HepG2 (cell line): ENCODE measurements at regions of chr14 and their contacts with region 1.

Region 1: GRCh38 chr14:94636522-94637412 is 24.6 kb downstream of the SERPINA3 start:
- DNase-seq: peak; percentile 80
- ATAC-seq: peak; percentile 74
- H3K4me3 ChIP-seq: peak overlapping the region in 1 of 3 experiments; percentile 39; a peak in 1 of 6 replicates
- H3K27ac ChIP-seq: peak overlapping the region; percentile 52
- H3K4me1 ChIP-seq: peaks cover 92% of the 10 kb centered on the region
- H3K27me3 ChIP-seq: no peaks in the 10 kb centered on the region
- CTCF ChIP-seq: peak; percentile 84
- EP300 ChIP-seq: peak in 1 of 2 experiments; percentile 94; a peak in 2 of 4 replicates
- POLR2A ChIP-seq: no peak
- RAD21 ChIP-seq: no peak; the same call in none of the 2 replicates

Region 2: DNA sequence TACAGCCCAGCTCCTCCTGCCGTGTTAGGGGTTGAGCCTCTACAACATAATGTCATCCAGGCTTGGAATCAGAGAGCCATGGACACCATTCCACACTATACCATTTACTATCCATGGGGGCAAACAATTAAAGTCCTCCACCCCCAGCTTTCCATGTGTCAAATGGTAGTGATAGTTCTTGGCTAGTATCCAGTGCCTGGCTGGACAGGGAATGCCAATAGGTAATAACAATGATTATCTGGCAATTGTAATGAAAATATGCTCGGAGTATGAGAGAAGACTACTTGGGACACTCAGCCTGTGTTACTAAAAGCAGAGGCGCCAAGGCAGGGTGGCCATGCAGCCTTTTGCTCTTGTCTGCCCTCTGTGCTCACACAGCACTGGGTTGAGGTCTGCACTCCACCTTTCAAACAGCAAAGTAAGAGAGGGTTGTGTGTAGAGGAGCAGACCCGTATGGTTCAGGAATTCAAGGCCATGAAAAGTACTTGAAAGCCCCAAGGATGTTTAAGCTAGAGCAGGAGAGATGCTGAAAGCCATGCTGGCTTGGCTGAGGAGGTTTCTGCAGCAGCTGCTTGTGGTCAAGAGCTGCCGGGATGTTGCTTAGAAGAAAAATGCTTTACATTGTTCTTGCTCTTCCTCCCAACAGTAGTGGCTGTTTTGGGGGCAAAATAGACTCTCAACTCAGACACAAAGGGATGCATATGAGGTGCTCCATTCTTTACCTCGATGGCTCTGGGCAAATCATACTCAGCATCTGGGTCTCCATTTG is 13.9 kb before region 1 on chr14:
- CTCF ChIA-PET with region 1: no interaction called
- POLR2A ChIA-PET with region 1: interaction called, 12 read pairs
- in situ Hi-C with region 1: no loop called
- intact Hi-C with region 1: no loop called
- DNase-seq: no peak
- ATAC-seq: no peak
- H3K4me3 ChIP-seq: no peak overlapping the region
- H3K27ac ChIP-seq: no peak overlapping the region
- H3K4me1 ChIP-seq: peaks cover 44% of the 10 kb centered on the region
- H3K27me3 ChIP-seq: no peaks in the 10 kb centered on the region
- CTCF ChIP-seq: no peak
- EP300 ChIP-seq: no peak
- POLR2A ChIP-seq: no peak; a peak in 1 of 4 replicates
- RAD21 ChIP-seq: no peak

Region 3: DNA sequence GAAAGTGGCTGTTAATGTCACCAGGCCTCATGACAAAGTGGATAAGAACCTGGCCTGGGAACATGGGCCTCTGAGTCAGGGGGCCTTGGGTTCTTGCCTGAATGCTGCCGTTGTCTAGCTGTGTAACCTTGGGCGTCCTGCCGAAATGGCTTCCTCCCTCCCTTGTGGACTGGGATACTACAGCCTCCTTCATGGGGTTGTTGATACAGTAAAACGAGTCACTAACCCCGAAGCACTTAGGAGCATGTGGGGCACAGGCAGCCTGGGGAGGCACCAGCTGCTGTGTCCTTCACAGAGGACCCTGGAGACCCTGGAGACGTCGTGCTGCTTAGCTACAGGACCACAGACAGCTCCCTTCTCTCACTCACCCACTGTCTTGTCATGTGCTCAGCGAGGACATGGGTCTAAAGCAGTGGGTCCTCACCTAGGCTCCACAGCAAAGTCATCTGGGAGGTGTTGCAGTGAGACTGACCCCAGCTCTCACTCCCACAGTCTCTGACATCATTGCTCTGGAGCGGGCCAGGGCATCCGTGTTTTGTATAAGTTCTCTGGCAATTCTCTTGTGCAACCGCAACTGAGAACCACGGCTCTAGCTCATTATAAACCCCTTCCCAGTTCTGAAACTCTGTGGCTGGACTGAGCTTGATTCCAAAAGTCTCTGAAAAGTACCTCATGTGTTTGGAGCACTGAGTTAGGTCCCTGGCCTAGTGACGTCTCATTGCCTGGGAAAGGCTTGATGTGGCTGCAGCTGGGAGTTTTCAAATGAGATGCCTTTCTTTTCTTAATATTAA is 17.5 kb after region 1 on chr14:
- CTCF ChIA-PET with region 1: no interaction called
- POLR2A ChIA-PET with region 1: interaction called, 5 read pairs
- in situ Hi-C with region 1: no loop called
- intact Hi-C with region 1: loop called (anchors 2 kb)
- DNase-seq: peak; percentile 74
- ATAC-seq: peak; percentile 86
- H3K4me3 ChIP-seq: peak overlapping the region in 1 of 3 experiments; percentile 41; a peak in 2 of 6 replicates
- H3K27ac ChIP-seq: no peak overlapping the region
- H3K4me1 ChIP-seq: peaks cover 52% of the 10 kb centered on the region
- H3K27me3 ChIP-seq: peaks cover 0 to 2% of the 10 kb centered on the region in 2 experiments; a peak in 1 of 5 replicates
- CTCF ChIP-seq: no peak
- EP300 ChIP-seq: no peak
- POLR2A ChIP-seq: no peak
- RAD21 ChIP-seq: no peak